Activated naive CD8-positive, alpha-beta T cell treated with anti-CD3 and anti-CD28 coated beads, Interleukin-2, amount 10 ng/mL, durations not matched to agents 7 days and 5 days (primary cell): ENCODE measurements at regions of chr7 and their contacts with region 1.

Region 1: DNA sequence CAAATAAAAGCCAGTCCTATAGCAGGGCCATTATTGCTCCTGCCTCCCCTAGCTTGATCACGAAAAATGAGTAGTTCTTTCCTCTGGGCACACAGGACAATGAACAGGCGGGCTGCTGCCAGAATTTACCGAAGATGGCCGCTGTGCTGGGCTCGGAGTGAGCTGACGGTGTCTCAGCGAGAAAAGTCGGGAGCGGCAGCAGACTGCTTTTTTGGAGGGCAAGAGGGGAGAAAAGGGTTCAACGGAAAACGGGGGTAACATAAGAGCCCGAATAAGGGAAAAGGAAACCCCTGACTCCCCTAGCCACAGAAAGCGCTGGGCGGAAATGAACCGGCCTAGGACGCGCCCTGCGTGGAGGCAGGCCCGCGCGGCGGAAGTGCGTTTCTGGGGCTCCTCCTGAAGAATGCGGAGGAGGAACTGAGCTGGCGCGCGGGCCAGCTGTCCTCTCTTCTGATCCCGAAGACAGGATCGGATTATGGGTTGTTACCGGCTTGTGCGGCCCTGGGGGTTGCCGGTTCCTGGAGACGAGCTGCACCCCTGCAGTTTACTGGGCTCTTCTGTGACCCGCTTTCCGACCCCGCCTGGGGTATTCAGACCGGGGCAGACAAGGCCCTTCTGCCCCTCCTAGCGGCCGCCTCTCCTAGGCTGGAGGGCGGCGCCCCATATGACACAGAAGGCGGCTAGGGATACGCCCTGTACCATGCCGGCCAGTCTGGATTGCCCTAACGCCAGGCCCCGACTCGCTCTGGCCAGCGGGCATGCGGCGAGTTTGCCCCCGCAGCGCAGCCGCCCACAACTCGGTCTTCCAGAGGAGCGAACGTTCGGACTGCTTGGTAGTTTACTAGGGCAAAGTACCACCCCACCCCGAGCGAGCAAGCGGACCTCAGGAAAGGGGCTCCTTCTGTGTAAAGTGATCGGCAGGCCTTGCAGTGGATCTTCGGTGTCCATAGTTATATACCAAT is 30.1 kb upstream of the KMT2E start:
- DNase-seq: peak; percentile 88
- ATAC-seq: peak; percentile 90
- H3K4me3 Mint-ChIP-seq: peak overlapping the region; percentile 100
- H3K27ac Mint-ChIP-seq: peak overlapping the region; percentile 100
- H3K4me1 Mint-ChIP-seq: peaks cover 53% of the 10 kb centered on the region
- H3K27me3 Mint-ChIP-seq: no peaks in the 10 kb centered on the region

Region 2: GRCh38 chr7:104943502-104944343 is 40.1 kb before region 1 on chr7:
- POLR2A ChIA-PET with region 1: interaction called, 19 read pairs
- DNase-seq: peak; percentile 68
- ATAC-seq: peak; percentile 56
- H3K4me3 Mint-ChIP-seq: peak overlapping the region; percentile 92
- H3K27ac Mint-ChIP-seq: peak overlapping the region; percentile 100
- H3K4me1 Mint-ChIP-seq: peaks cover 58% of the 10 kb centered on the region
- H3K27me3 Mint-ChIP-seq: no peaks in the 10 kb centered on the region

Region 3: GRCh38 chr7:105006437-105007133 is 22.7 kb after region 1 on chr7:
- POLR2A ChIA-PET with region 1: interaction called, 213 read pairs
- DNase-seq: no peak
- ATAC-seq: peak; percentile 25
- H3K4me3 Mint-ChIP-seq: peak overlapping the region; percentile 10
- H3K27ac Mint-ChIP-seq: no peak overlapping the region
- H3K4me1 Mint-ChIP-seq: peaks cover 57% of the 10 kb centered on the region
- H3K27me3 Mint-ChIP-seq: no peaks in the 10 kb centered on the region

Region 4: DNA sequence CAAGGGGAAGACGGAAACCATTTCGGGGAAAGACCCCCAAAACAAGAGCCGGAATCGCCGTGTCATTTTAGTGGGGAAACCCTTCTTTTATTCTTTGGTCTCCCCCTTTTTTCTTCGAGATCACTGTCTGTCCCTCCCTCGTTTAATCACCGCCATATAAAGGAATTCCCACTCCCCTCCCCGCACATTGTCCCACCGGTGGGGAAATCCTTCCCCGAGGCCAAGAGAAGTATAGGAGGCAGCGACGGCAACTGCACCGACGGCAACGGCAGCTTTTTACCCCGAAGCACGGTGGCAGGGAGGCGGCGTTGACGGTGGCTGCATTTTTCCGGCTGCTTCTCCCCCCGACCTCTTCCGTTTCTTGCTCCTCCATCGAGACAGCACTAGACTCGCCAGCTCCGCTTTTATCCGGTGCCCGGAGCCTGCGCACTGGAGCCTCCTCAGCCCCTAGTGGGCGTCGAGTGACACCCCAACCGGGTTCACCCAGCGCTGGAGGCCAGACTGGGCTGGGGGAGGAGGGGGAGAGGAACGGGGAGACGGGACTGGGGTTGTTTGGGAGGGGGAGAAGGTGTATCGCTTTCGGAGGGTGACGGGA is 29.5 kb after region 1 on chr7:
- POLR2A ChIA-PET with region 1: interaction called, 213 read pairs
- DNase-seq: peak; percentile 88
- ATAC-seq: peak; percentile 60
- H3K4me3 Mint-ChIP-seq: peak overlapping the region; percentile 94
- H3K27ac Mint-ChIP-seq: peak overlapping the region; percentile 100
- H3K4me1 Mint-ChIP-seq: peaks cover 30% of the 10 kb centered on the region
- H3K27me3 Mint-ChIP-seq: no peaks in the 10 kb centered on the region

Region 5: DNA sequence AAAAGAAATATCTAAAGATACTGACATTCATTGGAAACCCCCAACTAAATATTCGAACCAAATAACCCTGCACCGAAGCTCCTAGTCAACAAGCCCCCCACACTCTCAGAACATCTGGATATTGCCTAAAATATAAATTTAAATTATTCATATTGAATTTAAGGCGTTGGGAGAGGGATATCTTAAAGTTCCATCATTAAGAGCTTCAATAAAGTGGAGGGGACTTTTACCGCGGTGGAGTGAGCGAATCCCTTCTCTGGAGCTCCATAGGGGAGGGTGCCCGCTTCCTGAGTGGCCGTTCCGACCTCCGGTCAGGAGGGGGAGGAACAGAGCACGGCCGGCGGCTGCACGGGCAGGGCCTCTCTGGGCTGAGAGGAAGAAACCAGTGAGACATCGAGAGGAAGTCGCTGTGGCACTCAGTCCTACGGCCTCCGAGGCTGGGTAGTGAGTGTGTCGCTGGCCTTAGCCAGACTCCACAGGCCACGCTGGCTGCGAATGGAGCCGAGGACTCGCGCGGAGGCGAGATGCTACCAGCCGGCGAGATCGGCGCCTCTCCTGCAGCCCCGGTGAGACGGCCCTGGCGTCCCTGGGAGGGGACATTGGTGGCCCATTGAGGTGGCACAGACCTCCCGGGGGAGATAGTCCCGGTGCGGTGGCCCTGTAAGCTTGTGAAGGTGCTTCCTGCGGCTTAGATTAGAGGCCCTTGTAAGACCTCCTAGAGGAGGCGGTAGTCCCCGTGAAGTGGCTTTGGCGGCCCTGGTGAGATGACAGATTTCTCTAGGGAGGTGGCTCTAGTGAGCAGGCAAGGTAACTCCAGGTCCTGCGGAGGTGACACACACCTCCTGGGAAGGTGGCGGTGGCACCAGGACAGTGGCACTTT is 548.2 kb after region 1 on chr7 and contains the start of gene RINT1:
- POLR2A ChIA-PET with region 1: interaction called, 10 read pairs
- DNase-seq: peak; percentile 88
- ATAC-seq: peak; percentile 96
- H3K4me3 Mint-ChIP-seq: peak within 1 kb of the TSS; percentile 90
- H3K27ac Mint-ChIP-seq: peak within 1 kb of the TSS; percentile 91
- H3K4me1 Mint-ChIP-seq: peaks cover 19% of the 10 kb centered on the region
- H3K27me3 Mint-ChIP-seq: no peaks in the 10 kb centered on the region
- total RNA-seq, gene RINT1: 22.0 to 25.5 TPM